ENCODE measurements at regions of chr10 and their contacts with region 1.

Region 1: DNA sequence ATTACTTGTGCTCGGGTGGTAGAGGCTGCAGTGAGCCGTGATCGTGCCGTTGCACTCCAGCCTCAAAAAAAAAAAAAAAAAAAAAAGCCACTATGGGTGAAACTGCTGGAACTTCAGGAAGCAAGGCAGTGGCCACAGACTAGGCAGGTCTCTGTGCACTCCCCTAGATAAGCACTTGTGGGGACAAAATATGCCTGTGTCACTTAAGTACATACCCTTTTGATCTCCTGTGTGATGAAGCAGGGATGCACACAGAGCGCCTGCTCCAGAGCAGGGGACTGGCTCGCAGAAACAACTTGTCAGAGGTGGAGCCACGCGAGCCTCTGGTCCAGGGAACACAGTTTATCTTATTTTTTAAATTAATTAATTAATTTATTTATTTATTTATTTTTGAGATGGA is 42.9 kb upstream of the PSAP start:
- DNase-seq: no peak
- ATAC-seq: no peak
- H3K4me3 Mint-ChIP-seq: no peak overlapping the region
- H3K27ac Mint-ChIP-seq: no peak overlapping the region
- H3K4me1 Mint-ChIP-seq: peaks cover 6% of the 10 kb centered on the region
- H3K27me3 Mint-ChIP-seq: peaks cover 16% of the 10 kb centered on the region

Region 2: DNA sequence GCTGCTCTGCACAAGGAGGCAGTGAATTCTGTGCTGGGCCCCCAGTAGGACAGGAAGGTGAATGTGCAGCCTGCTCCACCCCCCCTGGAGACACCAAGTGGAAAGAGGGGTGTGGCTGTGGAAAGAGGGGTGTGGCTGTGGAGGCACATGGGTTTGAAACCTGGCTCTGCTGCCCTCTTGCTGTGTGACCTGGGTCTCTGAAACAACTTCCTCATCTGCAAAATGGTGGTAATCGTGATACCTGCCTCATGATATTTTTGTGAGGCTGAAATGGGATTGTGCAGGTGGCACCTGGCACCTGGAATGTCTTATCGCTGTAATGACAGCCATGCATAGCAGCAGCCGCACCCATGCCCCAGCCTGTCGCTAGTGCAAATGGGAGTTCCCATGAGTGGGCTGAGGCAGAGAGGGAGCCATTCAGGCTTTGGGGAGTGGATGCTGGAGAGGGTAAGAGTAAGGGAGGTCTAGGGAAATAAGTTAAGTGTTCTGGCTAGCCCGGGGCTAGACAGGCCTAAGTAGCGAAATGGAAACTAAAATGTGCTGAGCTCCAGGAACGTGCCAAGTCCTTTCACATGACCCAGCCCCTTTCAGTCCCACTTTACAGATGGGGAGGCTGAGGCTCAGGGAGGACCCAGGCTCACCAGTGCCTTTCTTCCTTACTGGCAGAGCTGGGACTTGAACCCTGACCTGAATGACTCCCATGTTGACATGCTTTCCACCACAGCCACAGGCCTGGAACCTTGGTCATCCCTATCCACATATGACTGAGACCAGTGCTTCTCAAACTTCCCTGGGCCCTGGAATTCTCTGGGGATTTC is 209.4 kb before region 1 on chr10:
- CTCF ChIA-PET with region 1: no interaction called
- DNase-seq: no peak
- ATAC-seq: peak; percentile 51
- H3K4me3 Mint-ChIP-seq: no peak overlapping the region
- H3K27ac Mint-ChIP-seq: no peak overlapping the region
- H3K4me1 Mint-ChIP-seq: no peaks in the 10 kb centered on the region
- H3K27me3 Mint-ChIP-seq: no peaks in the 10 kb centered on the region

Region 3: GRCh38 chr10:71822448-71822763 is 71.5 kb before region 1 on chr10:
- CTCF ChIA-PET with region 1: interaction called, 11 read pairs
- DNase-seq: peak; percentile 65
- ATAC-seq: peak; percentile 79
- H3K4me3 Mint-ChIP-seq: no peak overlapping the region
- H3K27ac Mint-ChIP-seq: no peak overlapping the region
- H3K4me1 Mint-ChIP-seq: peaks cover 19% of the 10 kb centered on the region
- H3K27me3 Mint-ChIP-seq: no peaks in the 10 kb centered on the region

Region 4: GRCh38 chr10:71840177-71840957 is 53.6 kb before region 1 on chr10:
- CTCF ChIA-PET with region 1: interaction called, 14 read pairs
- DNase-seq: no peak
- ATAC-seq: no peak
- H3K4me3 Mint-ChIP-seq: no peak overlapping the region
- H3K27ac Mint-ChIP-seq: no peak overlapping the region
- H3K4me1 Mint-ChIP-seq: peaks cover 36% of the 10 kb centered on the region
- H3K27me3 Mint-ChIP-seq: no peaks in the 10 kb centered on the region

Region 5: GRCh38 chr10:71850637-71851464 is 43.1 kb before region 1 on chr10 and contains the start of gene PSAP:
- CTCF ChIA-PET with region 1: interaction called, 23 read pairs
- DNase-seq: peak; percentile 99
- ATAC-seq: peak; percentile 99
- H3K4me3 Mint-ChIP-seq: peak within 1 kb of the TSS; percentile 84
- H3K27ac Mint-ChIP-seq: peak within 1 kb of the TSS; percentile 78
- H3K4me1 Mint-ChIP-seq: peaks cover 30% of the 10 kb centered on the region
- H3K27me3 Mint-ChIP-seq: peaks cover 3% of the 10 kb centered on the region
- total RNA-seq, gene PSAP: 111 to 118 TPM

Region 6: DNA sequence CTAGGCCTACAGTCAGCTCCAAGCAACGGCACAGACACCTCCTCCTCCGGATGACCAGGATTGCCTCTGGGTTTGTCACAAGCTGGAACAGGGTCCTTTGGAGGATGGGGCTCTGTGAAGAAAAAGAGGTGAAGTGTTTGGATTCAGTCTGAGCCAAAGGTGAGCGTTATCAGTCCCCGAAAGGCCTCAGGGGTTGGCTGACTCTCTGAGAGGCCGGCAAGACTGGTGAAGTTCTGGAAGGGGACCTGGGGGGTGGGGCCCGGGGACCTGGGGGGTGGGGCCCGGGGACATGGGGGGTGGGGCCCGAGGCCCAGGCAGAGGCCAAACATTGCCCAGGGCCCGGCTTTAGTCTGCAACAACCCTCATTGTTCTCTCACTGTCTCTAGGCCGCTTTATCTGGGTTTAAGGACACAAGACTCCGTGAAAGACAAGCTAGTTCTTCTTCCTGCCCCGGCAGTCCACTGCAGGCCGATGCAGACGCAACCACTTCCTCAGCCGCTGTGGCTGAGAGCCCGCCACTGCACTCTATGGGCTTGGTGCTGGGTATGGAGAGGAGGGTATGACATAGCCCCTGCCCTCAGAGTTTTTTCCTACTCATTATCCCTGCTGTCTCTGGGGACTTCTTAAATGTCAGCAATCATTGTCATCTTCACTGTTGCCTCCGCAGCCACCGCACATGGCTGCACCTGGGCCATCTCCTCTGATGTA is 15.4 kb before region 1 on chr10:
- CTCF ChIA-PET with region 1: interaction called, 26 read pairs
- DNase-seq: peak; percentile 63
- ATAC-seq: peak; percentile 71
- H3K4me3 Mint-ChIP-seq: no peak overlapping the region
- H3K27ac Mint-ChIP-seq: no peak overlapping the region
- H3K4me1 Mint-ChIP-seq: peaks cover 20% of the 10 kb centered on the region
- H3K27me3 Mint-ChIP-seq: peaks cover 12% of the 10 kb centered on the region

Region 7: GRCh38 chr10:71999360-72000072 is 105.6 kb after region 1 on chr10:
- CTCF ChIA-PET with region 1: no interaction called
- DNase-seq: no peak
- ATAC-seq: no peak
- H3K4me3 Mint-ChIP-seq: no peak overlapping the region
- H3K27ac Mint-ChIP-seq: no peak overlapping the region
- H3K4me1 Mint-ChIP-seq: no peaks in the 10 kb centered on the region
- H3K27me3 Mint-ChIP-seq: peaks cover 10% of the 10 kb centered on the region

Region 8: GRCh38 chr10:72337020-72337629 is 443.2 kb after region 1 on chr10:
- CTCF ChIA-PET with region 1: interaction called, 15 read pairs
- DNase-seq: peak; percentile 75
- ATAC-seq: no peak
- H3K4me3 Mint-ChIP-seq: no peak overlapping the region
- H3K27ac Mint-ChIP-seq: peak overlapping the region; percentile 22
- H3K4me1 Mint-ChIP-seq: peaks cover 67% of the 10 kb centered on the region
- H3K27me3 Mint-ChIP-seq: no peaks in the 10 kb centered on the region